ENCODE measurements at regions of chr15 and their contacts with region 1.

Region 1: DNA sequence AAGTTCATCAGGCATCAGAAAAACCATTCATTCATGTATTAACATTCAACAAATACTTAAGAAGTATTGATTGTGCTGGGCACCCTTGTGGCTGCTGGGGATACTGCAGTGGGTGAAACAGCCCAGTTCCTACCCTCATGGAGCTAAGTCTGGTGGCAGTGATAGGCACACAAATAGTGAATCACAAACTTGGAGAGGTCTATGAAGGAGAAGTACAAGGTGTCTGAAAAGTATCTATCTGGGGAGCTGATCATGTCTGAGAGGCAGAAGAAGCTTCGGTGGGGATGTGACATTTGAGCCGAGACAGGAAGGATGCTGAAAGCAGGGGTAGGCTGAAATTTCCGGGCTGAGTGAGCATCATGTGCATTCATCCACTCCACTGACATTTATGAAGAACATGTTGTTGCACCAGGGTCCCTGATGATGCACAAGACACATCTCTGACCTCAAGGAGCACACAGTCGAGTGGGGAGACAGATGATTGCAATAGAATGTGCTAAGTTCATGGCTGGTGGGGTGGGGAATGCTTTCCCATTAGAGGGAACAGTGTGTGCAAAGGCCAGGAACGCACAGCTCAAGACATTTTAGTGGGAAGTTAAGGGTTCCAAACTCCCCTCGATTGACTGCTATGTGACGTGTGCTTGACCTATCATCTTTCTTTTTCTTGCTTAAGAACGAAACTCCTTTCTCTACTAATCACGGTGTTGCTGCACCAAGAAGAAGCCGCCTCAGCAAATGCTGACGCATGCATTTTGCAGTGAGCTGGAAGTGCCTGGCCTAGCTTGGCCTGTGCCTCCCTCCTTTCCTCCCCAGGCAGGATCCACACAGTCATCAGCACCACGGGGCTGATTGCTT is 309.1 kb upstream of the ICE2 start:
- DNase-seq: peak; percentile 40
- ATAC-seq: peak; percentile 82
- H3K4me3 Mint-ChIP-seq: no peak overlapping the region
- H3K27ac Mint-ChIP-seq: no peak overlapping the region
- H3K4me1 Mint-ChIP-seq: peaks cover 42% of the 10 kb centered on the region
- H3K27me3 Mint-ChIP-seq: no peaks in the 10 kb centered on the region
- CTCF ChIP-seq: peak; percentile 62

Region 2: DNA sequence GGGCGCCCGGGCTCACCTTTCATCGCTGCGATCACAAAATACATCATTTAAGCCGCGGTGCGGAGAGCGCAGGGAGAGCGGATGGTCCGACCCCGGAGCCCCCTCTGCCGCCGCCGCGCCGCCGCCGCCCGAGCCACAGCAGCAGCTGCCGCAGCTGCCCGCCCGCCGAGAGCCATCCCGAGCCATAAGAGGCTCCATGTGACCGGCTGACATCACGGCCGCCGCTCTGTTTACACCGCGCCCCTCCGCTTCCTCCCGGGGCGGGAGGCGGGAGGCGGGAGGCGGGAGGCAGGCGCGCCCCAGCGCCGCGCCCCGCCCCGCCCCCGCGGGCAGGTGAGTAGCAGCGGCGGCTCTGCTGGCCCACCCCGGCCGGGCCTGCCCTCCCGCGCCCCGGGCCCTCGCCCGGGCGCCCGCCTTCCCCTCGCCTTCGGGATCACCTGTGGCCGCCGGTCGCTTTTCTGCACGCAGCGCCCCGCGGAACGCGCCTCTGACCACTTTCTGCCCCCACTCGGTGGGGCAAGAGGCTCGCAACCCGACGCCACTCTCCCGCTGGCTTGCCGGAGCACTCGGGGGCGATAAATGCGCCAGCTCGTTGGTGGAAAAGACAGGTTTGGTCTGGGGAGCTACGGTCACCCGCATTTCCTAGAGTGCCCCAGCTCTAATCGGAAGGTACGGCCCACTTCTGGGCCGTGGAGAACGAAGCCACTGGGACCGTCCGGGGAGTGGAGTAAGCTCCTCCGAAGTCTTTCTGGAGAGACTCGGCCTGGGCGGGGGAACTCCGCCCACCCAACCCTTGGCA is 195.5 kb before region 1 on chr15:
- CTCF ChIA-PET with region 1: interaction called, 12 read pairs
- POLR2A ChIA-PET with region 1: no interaction called
- DNase-seq: peak; percentile 85
- ATAC-seq: peak; percentile 81
- H3K4me3 Mint-ChIP-seq: peak overlapping the region; percentile 84
- H3K27ac Mint-ChIP-seq: peak overlapping the region; percentile 87
- H3K4me1 Mint-ChIP-seq: peaks cover 32% of the 10 kb centered on the region
- H3K27me3 Mint-ChIP-seq: peaks cover 41% of the 10 kb centered on the region
- CTCF ChIP-seq: no peak

Region 3: DNA sequence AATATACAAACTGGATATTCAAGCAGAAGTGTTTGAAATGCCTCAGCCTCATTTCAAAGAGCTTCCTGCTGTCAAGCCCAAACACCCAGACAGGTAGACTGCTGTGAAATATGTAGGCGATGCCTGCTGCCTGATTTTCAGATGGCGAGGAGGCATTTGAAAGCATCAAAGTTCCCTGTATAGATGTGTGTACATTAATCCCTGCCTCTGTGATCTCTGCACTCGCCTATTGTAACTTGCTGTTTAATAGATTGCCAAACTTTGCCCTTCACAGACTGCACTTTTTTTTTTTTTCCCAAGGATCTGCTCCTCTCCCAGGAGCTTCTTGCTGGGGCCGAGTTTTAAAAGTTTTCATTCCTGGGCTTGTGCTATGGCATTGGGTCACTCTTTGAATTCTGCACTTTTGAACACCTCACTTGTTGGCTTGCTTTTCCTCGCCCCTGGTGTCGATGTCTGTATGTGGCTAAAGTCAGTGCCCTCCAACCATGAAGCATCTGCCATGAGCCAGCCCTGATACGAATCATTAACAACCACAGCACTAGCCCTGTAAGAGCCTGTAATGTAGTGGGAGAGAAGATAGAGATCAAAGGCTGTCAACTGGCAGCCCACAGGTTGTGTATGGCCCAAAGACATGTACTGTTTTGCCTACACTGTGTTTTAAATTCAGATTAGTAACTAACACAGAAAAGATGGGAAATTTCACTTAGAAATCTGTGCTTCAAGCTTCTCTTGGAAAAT is 21.5 kb before region 1 on chr15:
- CTCF ChIA-PET with region 1: interaction called, 17 read pairs
- POLR2A ChIA-PET with region 1: no interaction called
- DNase-seq: no peak
- ATAC-seq: peak; percentile 43
- H3K4me3 Mint-ChIP-seq: no peak overlapping the region
- H3K27ac Mint-ChIP-seq: no peak overlapping the region
- H3K4me1 Mint-ChIP-seq: peaks cover 48% of the 10 kb centered on the region
- H3K27me3 Mint-ChIP-seq: peaks cover 28% of the 10 kb centered on the region
- CTCF ChIP-seq: no peak

Region 4: DNA sequence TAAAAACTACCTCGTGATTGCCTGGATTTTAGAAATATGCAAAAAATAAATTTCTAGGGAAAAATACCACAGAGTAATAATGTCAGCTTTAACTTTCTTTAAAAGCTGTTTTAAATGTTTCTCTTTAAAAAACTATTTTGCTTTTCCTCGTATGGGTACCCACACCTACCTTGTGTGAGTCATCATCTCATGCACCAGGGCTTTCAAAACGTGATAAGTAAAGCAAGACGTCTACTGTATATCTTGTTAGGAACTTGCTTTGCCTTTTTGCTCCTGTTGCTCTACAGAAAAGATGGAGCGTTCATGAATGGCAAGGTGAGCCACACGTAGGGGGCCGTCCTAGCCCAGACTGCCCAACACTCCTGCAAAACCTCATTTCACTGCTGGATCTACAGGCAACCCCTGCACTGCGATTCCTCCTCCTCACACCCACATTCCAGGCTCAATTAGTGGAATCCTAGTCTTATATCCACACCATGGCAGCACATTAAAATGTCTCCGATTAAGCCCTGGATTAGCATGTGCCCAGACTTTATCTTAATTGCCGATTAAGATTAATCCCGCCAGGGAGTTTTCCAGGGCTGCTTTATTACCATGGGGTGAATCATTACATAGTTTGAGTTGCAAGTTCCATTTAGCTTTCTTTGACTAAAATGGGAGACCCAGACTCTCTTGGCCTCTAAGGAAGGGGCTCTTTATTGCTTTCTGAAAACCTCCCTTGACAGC is 15.5 kb before region 1 on chr15:
- CTCF ChIA-PET with region 1: interaction called, 12 read pairs
- POLR2A ChIA-PET with region 1: no interaction called
- DNase-seq: no peak
- ATAC-seq: 0 out of 2 replicates have a peak, but pooled peaks have one; percentile 32
- H3K4me3 Mint-ChIP-seq: no peak overlapping the region
- H3K27ac Mint-ChIP-seq: no peak overlapping the region
- H3K4me1 Mint-ChIP-seq: peaks cover 49% of the 10 kb centered on the region
- H3K27me3 Mint-ChIP-seq: peaks cover 7% of the 10 kb centered on the region
- CTCF ChIP-seq: no peak

Region 5: GRCh38 chr15:60777558-60777957 is 10.5 kb before region 1 on chr15:
- CTCF ChIA-PET with region 1: interaction called, 12 read pairs
- POLR2A ChIA-PET with region 1: no interaction called
- DNase-seq: no peak
- ATAC-seq: no peak
- H3K4me3 Mint-ChIP-seq: no peak overlapping the region
- H3K27ac Mint-ChIP-seq: no peak overlapping the region
- H3K4me1 Mint-ChIP-seq: peaks cover 84% of the 10 kb centered on the region
- H3K27me3 Mint-ChIP-seq: peaks cover 26% of the 10 kb centered on the region
- CTCF ChIP-seq: no peak

Region 6: GRCh38 chr15:60798821-60799220 is 10.8 kb after region 1 on chr15:
- CTCF ChIA-PET with region 1: interaction called, 24 read pairs
- POLR2A ChIA-PET with region 1: no interaction called
- DNase-seq: no peak
- ATAC-seq: no peak
- H3K4me3 Mint-ChIP-seq: no peak overlapping the region
- H3K27ac Mint-ChIP-seq: no peak overlapping the region
- H3K4me1 Mint-ChIP-seq: peaks cover 44% of the 10 kb centered on the region
- H3K27me3 Mint-ChIP-seq: no peaks in the 10 kb centered on the region
- CTCF ChIP-seq: no peak

Region 7: DNA sequence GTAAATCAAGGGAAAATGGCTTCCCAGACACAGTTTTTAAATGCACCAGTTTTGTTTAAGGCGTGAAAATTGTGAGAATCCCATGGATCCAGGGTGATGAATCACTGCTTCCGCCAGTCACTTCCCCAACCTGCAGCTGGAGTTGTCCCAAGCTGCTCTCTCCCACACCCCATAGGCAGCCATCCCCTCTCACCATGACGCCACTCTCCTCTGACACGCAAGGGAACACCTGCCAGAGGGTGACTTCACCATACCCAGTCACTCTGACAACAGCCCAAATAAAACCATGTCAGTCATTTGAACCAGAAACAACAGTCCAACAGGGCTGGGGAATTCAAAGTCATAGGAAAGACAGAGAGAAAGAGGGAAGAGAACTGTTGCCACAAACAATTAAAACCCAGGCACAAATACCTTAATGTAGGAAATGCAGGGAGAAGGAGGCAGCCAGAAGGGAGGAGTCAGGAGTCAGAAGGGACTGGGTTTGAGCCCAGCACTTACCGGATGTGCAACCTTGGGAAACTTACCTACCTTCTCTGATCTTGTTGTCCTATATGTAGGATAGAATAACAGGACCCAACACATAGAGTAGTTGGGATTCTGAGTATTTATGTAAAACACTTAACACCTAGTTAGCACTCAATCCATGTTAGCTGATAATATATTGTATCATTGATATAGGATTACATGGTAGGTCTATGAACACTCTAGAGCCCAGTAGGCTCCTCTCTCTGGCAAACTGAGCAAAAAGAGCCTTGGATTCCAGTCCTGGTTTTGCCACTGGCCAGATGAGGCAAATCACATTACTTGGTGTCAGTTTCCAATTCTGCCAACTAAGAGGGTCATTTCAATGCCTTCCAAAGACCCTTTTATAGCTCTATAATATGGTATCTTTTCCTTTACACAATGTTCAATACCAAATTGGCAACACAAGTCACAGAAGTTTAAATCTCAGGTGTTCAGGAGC is 17.2 kb after region 1 on chr15:
- CTCF ChIA-PET with region 1: interaction called, 17 read pairs
- POLR2A ChIA-PET with region 1: interaction called, 3 read pairs
- DNase-seq: peak; percentile 73
- ATAC-seq: peak; percentile 90
- H3K4me3 Mint-ChIP-seq: peak overlapping the region; percentile 41
- H3K27ac Mint-ChIP-seq: peak overlapping the region; percentile 99
- H3K4me1 Mint-ChIP-seq: peaks cover 60% of the 10 kb centered on the region
- H3K27me3 Mint-ChIP-seq: no peaks in the 10 kb centered on the region
- CTCF ChIP-seq: no peak

Measured in WTC11 (cell line).